ENCODE measurements at regions of chr4 and their contacts with region 1.

Region 1: GRCh38 chr4:1899149-1900086 is 28.2 kb downstream of the NSD2 start:
- DNase-seq: peak; percentile 92
- H3K4me3 ChIP-seq: no peak overlapping the region
- H3K27ac ChIP-seq: no peak overlapping the region
- H3K4me1 ChIP-seq: no peaks in the 10 kb centered on the region
- H3K27me3 ChIP-seq: no peaks in the 10 kb centered on the region
- CTCF ChIP-seq: peak; percentile 77 to 87 (median 82)
- EP300 ChIP-seq: no peak
- POLR2A ChIP-seq: no peak

Region 2: GRCh38 chr4:1746265-1746691 is 153.1 kb before region 1 on chr4:
- intact Hi-C with region 1: loop called (anchors 5 kb)
- DNase-seq: no peak
- H3K4me3 ChIP-seq: no peak overlapping the region
- H3K27ac ChIP-seq: no peak overlapping the region
- H3K4me1 ChIP-seq: peaks cover 0 to 7% (median 5%) of the 10 kb centered on the region in 4 donors
- H3K27me3 ChIP-seq: peaks cover 0 to 44% (median 2%) of the 10 kb centered on the region in 4 donors
- CTCF ChIP-seq: peak; percentile 59 to 77 (median 69)
- EP300 ChIP-seq: no peak
- POLR2A ChIP-seq: no peak

Region 3: GRCh38 chr4:1856042-1856788 is 43.2 kb before region 1 on chr4 and contains the start of gene LETM1:
- intact Hi-C with region 1: loop called (anchors 5 kb)
- DNase-seq: peak; percentile 97
- H3K4me3 ChIP-seq: peak within 1 kb of the TSS; percentile 67 to 92 (median 78)
- H3K27ac ChIP-seq: peak within 1 kb of the TSS; percentile 73 to 96 (median 90)
- H3K4me1 ChIP-seq: peaks cover 41 to 62% (median 49%) of the 10 kb centered on the region in 4 donors
- H3K27me3 ChIP-seq: no peaks in the 10 kb centered on the region
- CTCF ChIP-seq: peak in 1 of 3 experiments; percentile 21
- EP300 ChIP-seq: no peak
- POLR2A ChIP-seq: peak; percentile 5
- total RNA-seq, gene LETM1: 23.7 to 34.7 (median 33.3) TPM

Measured in esophagus muscularis mucosa (tissue), 4 donors.